Activated CD4-positive, alpha-beta memory T cell treated with anti-CD3 and anti-CD28 coated beads for 36 hours (primary cell): ENCODE measurements at regions of chr3 and their contacts with region 1.

Region 1: DNA sequence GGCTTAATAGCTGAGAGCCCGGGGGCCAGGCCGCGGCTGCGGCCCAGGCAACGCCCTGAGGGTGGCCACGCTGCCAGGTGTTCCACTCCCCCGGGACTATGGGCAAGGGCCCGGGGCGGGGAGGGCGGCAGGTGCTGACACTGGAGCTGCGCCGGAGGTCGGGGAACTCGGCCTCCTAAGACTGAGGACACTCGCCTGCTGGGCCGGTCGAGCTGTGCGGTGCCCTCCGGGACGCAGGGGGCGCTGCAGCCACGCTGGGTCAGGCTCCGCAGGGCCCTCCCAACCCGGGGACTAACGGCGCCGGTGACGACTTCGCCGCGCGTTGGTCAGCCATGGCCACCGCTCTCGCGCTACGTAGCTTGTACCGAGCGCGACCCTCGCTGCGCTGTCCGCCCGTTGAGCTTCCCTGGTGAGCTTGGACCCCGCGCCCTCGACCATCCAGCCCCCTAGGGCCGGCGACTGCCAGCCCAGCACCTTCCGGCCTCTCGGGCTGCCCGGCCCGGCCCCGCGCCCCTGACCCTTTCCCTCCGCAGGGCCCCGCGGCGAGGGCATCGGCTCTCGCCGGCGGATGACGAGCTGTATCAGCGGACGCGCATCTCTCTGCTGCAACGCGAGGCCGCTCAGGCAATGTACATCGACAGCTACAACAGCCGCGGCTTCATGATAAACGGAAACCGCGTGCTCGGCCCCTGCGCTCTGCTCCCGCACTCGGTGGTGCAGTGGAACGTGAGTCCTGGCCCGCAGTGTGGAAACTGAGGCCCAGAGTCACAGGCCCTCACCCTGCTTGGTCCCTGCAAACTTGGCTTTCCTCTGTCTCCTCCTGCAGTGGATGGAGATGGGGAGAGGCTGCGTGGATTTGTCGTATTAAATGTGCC is at the start of gene NDUFAF3:
- DNase-seq: peak; percentile 96
- H3K4me3 Mint-ChIP-seq: peak within 1 kb of the TSS; percentile 97
- H3K27ac Mint-ChIP-seq: peak within 1 kb of the TSS; percentile 98
- H3K4me1 Mint-ChIP-seq: peaks cover 56% of the 10 kb centered on the region
- H3K27me3 Mint-ChIP-seq: no peaks in the 10 kb centered on the region
- total RNA-seq, gene NDUFAF3: 101 to 106 TPM

Region 2: DNA sequence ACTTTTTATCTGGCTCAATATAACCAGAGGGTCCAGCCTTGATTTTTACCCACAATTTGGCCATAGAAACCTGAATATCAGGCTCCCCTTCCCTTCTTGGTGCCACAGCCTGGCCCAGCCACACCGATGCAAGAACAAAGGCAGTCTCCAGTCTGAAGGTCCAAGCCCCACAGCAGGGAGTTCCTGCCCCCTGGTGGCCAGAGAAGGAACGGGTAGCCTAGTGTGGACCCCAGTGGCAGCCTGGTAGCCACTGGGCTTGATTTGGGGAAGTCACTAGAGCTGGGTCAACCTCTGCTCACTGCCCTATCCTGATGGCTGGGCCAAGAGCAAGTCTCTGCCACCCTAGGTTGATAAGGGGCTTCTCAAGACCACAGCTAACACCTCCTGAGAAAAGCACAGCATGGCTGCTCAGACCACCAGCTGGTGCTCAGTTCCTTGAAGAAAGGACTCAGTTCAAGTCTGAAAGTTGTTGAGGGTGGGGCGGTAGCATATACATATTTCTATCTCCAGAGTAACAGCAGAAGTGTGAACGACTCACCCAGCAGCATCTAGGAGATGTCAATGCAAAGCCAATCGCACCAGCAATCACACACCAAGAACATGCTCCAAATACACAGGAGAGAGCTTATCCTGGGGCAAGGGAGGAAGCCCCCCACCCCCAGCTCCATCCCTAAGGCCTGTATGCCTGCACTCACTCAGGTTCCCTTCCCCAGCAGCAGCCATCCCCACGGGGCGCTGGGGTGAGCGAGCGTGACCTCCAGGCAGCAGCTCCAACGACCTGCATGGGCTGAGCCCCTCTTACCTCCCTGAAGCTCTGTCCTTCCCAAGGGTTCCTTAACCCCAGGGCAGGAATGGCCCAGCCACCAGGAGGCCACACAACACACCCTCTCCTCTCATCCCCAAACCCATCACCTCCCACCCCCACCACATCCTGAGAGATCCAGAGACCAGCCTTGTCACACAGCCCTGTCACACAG is 473.0 kb before region 1 on chr3:
- CTCF ChIA-PET with region 1: no interaction called
- POLR2A ChIA-PET with region 1: no interaction called
- intact Hi-C with region 1: no loop called
- DNase-seq: peak; percentile 90
- H3K4me3 Mint-ChIP-seq: no peak overlapping the region
- H3K27ac Mint-ChIP-seq: no peak overlapping the region
- H3K4me1 Mint-ChIP-seq: peaks cover 7% of the 10 kb centered on the region
- H3K27me3 Mint-ChIP-seq: no peaks in the 10 kb centered on the region

Region 3: GRCh38 chr3:48716982-48717746 is 304.9 kb before region 1 on chr3 and contains the start of gene IP6K2:
- CTCF ChIA-PET with region 1: no interaction called
- POLR2A ChIA-PET with region 1: no interaction called
- intact Hi-C with region 1: loop called (anchors 5 kb)
- DNase-seq: peak; percentile 100
- H3K4me3 Mint-ChIP-seq: peak within 1 kb of the TSS; percentile 96
- H3K27ac Mint-ChIP-seq: peak within 1 kb of the TSS; percentile 87
- H3K4me1 Mint-ChIP-seq: peaks cover 30% of the 10 kb centered on the region
- H3K27me3 Mint-ChIP-seq: no peaks in the 10 kb centered on the region
- total RNA-seq, gene IP6K2: 41.6 to 43.4 TPM

Region 4: DNA sequence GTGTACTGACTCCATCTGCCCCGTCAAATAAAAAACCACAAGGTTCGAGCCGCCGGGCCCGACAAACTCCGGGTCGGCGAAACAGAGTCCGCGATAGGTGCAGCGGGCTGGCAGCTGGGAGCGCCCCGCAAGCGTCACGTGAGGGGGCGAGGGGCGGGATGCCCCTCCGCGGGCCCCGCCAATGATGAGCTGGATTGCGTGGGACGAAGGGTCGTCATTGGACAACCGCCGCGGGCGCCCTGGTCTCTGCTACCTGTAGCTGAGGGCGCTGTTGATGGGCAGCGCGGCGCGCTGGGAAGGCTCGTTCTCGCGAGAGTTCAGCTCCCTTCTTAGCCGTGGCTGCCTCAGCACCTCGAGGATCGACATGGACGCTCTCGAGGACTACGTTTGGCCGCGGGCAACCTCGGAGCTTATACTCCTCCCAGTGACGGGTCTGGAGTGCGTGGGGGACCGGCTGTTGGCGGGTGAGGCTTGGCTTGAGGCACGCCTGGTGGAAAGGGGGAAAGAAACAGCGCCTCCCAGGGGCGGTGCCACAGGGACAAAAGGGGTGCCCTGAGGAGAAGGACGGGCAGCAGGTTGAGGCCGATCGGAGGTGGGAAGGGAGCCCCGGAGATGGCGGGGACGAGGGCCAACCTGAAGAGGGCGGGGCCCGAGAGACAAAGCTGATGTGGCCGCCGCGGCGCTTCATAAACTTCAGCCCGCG is 14.8 kb before region 1 on chr3 and contains the start of gene WDR6:
- CTCF ChIA-PET with region 1: interaction called, 65 read pairs
- POLR2A ChIA-PET with region 1: interaction called, 135 read pairs
- intact Hi-C with region 1: loop called (anchors 1 kb)
- DNase-seq: peak; percentile 99
- H3K4me3 Mint-ChIP-seq: peak within 1 kb of the TSS; percentile 95
- H3K27ac Mint-ChIP-seq: peak within 1 kb of the TSS; percentile 98
- H3K4me1 Mint-ChIP-seq: peaks cover 21% of the 10 kb centered on the region
- H3K27me3 Mint-ChIP-seq: no peaks in the 10 kb centered on the region
- total RNA-seq, gene WDR6: 139 to 144 TPM

Region 5: GRCh38 chr3:49445381-49445780 is 423.3 kb after region 1 on chr3:
- CTCF ChIA-PET with region 1: interaction called, 5 read pairs
- POLR2A ChIA-PET with region 1: no interaction called
- intact Hi-C with region 1: loop called (anchors 10 kb)
- DNase-seq: no peak
- H3K4me3 Mint-ChIP-seq: no peak overlapping the region
- H3K27ac Mint-ChIP-seq: no peak overlapping the region
- H3K4me1 Mint-ChIP-seq: peaks cover 15% of the 10 kb centered on the region
- H3K27me3 Mint-ChIP-seq: no peaks in the 10 kb centered on the region